Right ventricle myocardium superior (tissue), 1 donor: ENCODE measurements at regions of chr3 and their contacts with region 1.

Region 1: GRCh38 chr3:108552267-108553159 is 36.7 kb downstream of the CIP2A start:
- DNase-seq: no peak
- ATAC-seq: peak; percentile 71

Region 2: GRCh38 chr3:108489771-108490170 is 62.7 kb before region 1 on chr3:
- intact Hi-C with region 1: loop called (anchors 2 kb)
- DNase-seq: no peak
- ATAC-seq: peak; percentile 74

Region 3: DNA sequence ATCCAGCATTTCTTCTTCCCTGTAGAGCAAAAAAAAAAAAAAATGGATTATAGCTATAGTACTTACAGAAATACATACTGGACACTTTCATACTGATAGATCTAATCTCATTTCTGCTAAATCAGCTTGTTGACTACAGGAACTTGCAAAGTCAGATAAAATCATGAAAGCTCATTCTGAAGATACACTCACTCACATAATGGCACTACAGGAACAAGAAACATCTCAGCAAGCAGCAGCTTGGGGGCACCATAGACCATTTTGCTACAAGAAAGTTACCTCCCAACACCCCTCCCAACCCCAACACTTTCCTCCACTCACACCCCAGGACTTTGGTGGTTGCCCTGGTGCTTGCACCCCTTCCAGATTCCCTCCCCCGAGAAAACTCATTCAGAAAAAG is 46.7 kb before region 1 on chr3:
- intact Hi-C with region 1: no loop called
- DNase-seq: no peak
- ATAC-seq: no peak

Region 4: GRCh38 chr3:109297496-109297895 is 745.0 kb after region 1 on chr3:
- intact Hi-C with region 1: no loop called
- DNase-seq: no peak
- ATAC-seq: no peak